ENCODE measurements at regions of chr6 and their contacts with region 1.

Region 1: GRCh38 chr6:27687154-27688013 is 214.5 kb upstream of the ZNF184 start:
- DNase-seq: peak; percentile 76
- H3K4me3 ChIP-seq: peak overlapping the region; percentile 65 to 67 (median 66)
- H3K27ac ChIP-seq: no peak overlapping the region
- H3K4me1 ChIP-seq: peaks cover 5% of the 10 kb centered on the region
- H3K27me3 ChIP-seq: no peaks in the 10 kb centered on the region
- CTCF ChIP-seq: peak; percentile 72 to 83

Region 2: DNA sequence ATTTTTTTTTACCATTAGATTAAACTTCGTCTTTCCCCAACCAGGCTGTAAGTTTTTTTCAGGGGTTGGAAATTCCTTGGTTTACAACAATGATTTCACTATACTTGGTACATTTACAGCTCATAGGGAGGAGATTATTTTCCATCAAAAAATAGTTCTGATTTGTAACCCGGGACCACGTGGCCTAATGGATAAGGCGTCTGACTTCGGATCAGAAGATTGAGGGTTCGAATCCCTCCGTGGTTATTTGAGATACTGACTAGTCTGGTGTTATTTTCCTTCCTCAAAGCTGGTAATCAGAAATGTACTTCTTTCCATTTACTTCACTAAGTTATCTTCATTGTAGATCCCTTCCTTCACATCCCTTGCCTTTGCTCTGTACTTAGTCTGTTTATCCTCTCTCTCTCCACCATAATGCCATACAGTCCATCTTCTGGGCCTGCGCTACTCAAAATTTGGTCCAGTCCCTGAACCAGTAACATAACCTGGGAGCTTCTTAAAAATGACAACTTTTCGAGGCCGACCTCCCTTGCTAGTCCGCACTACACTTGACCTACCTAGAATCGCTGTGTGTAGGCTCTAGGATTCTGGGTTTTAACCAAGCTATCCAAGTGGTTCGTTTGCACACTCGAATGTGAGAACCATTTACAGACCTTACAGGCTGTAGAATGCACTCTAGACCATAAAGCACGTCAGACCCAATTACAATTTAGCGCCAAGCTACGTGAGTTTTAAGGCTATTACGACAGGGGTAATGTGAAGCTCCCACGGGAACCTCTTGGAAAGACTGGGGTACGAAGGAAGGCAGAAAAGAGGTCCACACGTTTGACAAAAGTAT is 1364.5 kb before region 1 on chr6:
- CTCF ChIA-PET with region 1: no interaction called
- dilution Hi-C with region 1: no loop called
- in situ Hi-C with region 1: no loop called
- intact Hi-C with region 1: loop called (anchors 10 kb)
- DNase-seq: peak; percentile 90
- H3K4me3 ChIP-seq: peak overlapping the region; percentile 54 to 87 (median 60)
- H3K27ac ChIP-seq: peak overlapping the region; percentile 34
- H3K4me1 ChIP-seq: no peaks in the 10 kb centered on the region
- H3K27me3 ChIP-seq: no peaks in the 10 kb centered on the region
- CTCF ChIP-seq: no peak

Region 3: GRCh38 chr6:27188885-27189418 is 498.4 kb before region 1 on chr6:
- CTCF ChIA-PET with region 1: no interaction called
- dilution Hi-C with region 1: no loop called
- in situ Hi-C with region 1: no loop called
- intact Hi-C with region 1: loop called (anchors 1 kb)
- DNase-seq: peak; percentile 71
- H3K4me3 ChIP-seq: peak overlapping the region; percentile 56 to 74 (median 71)
- H3K27ac ChIP-seq: peak overlapping the region; percentile 44
- H3K4me1 ChIP-seq: no peaks in the 10 kb centered on the region
- H3K27me3 ChIP-seq: no peaks in the 10 kb centered on the region
- CTCF ChIP-seq: peak; percentile 38 to 68

Region 4: DNA sequence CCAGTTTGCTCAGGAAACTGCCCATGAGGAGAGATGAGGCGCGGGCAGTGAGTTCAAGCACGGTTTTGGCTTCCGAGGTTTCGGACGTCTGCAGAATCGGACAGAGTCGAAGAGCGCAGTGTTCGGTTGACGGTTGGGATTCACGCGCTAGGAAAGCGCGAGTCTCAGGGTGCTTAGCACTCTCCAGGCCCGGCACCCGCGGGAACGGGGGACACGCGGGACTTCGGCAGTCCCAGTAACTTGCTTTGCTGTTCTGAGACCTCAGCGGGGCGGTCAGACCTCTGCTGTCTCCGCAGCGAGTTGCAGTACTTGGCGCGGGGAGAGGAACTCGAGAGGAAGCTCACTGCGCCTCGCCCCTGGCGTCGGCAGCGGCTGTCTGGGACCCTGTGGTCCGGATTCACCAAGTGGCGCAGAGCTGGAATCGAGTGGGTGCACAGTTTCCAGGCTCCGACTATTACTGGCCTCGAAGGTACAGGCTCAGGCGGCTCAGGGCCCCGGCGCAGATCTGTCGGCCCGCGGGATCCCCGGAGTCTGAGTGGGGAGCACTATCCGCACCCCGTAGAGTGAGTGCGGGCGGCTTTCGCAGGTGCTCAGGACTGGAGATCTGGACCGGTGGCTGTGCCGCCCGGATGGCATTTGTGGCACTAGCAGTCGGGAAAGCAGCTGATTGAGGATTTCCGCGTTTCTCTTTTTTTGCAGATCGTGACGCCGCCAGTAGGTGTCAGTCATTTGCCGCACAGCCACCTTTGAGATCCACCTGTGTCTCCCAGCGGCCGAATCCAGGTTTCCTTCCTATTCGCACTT is 375.0 kb before region 1 on chr6 and contains the start of gene POM121L2:
- CTCF ChIA-PET with region 1: no interaction called
- dilution Hi-C with region 1: no loop called
- in situ Hi-C with region 1: no loop called
- intact Hi-C with region 1: loop called (anchors 5 kb)
- DNase-seq: peak; percentile 73
- H3K4me3 ChIP-seq: peak within 1 kb of the TSS; percentile 60 to 90 (median 65)
- H3K27ac ChIP-seq: no peak within 1 kb of the TSS
- H3K4me1 ChIP-seq: peaks cover 13% of the 10 kb centered on the region
- H3K27me3 ChIP-seq: no peaks in the 10 kb centered on the region
- CTCF ChIP-seq: peak; percentile 64 to 87
- total RNA-seq, gene POM121L2: not detected

Region 5: DNA sequence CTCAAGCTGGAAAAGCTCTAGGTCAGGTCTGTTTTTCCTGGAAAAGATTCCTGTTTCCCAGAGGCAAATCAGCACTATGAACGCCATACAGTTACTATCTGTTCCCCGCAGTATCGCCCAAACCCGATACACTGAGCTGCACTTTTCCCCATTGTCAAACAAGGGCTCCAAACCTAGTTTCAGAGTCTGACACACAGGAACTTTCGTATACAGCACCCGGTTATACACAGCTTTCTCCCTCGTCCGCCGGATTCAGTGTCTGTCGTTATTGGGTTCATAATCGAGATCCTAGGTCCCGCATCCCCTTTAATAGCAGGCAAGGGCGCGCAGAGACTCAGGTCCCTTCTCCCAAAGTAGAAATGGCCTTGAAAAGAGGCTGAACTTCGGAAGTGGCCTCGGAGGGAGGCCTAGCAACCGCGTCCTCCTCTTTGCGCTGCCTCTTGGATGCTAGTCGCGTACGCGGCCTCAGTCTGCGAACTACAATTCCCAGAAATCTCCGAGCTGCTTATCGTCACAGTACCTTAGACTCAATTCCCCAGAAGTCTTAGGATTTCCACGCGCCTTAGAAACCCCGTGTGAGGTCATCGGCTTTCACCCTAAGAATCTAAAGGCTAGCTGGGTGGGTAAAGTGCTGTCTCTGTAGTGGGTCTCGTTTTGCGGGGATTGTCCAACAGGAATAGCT is 264.6 kb before region 1 on chr6:
- CTCF ChIA-PET with region 1: no interaction called
- dilution Hi-C with region 1: no loop called
- in situ Hi-C with region 1: no loop called
- intact Hi-C with region 1: no loop called
- DNase-seq: no peak
- H3K4me3 ChIP-seq: no peak overlapping the region
- H3K27ac ChIP-seq: no peak overlapping the region
- H3K4me1 ChIP-seq: no peaks in the 10 kb centered on the region
- H3K27me3 ChIP-seq: no peaks in the 10 kb centered on the region
- CTCF ChIP-seq: no peak

Region 6: GRCh38 chr6:27503436-27504030 is 183.9 kb before region 1 on chr6:
- CTCF ChIA-PET with region 1: no interaction called
- dilution Hi-C with region 1: no loop called
- in situ Hi-C with region 1: no loop called
- intact Hi-C with region 1: loop called (anchors 5 kb)
- DNase-seq: peak; percentile 61
- H3K4me3 ChIP-seq: peak overlapping the region; percentile 48 to 64 (median 60)
- H3K27ac ChIP-seq: peak overlapping the region; percentile 71
- H3K4me1 ChIP-seq: no peaks in the 10 kb centered on the region
- H3K27me3 ChIP-seq: no peaks in the 10 kb centered on the region
- CTCF ChIP-seq: no peak

Region 7: DNA sequence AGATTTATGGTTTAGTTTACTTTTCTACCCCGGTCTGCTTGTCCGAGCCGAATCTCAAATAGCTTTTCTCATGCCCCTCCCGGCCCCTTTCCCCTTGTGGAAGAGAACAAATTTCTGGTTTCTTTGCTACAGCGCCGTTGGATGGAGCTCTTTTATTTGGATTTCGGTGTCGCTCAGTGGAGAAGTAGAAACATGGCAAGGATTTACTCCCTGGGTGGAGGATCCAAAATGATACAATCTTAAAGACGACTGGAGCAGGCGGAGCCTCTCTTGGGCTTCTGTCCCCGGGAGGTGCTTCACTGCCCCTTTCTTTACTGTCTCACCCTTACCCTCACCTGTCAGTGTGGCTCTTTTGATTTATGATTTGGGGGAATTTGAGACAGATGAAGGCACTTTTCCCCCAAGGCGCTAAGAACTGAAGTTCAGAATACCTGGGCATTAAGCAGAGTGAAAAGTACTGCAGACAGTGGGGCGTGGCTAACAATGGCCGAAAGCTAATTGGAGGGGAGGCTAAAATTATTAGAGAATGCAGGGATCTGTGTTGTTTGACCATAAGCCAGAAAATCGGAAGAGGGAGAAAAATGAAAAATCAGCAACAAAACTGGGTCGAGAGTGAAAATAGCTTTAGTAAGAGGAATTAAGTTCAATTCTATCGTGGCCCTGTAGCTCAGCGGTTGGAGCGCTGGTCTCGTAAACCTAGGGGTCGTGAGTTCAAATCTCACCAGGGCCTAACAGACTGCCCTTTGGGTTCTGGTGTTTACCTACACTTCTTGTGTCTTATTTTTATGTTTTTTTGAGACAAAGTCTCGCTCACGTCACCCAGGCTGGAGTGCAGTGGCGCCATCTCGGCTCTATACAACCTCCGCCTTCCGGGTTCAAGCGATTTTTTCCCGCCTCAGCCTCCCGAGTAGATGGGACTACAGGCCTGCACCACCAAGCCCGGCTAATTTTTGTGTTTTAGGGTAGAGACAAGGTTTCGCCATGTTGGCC is 69.4 kb before region 1 on chr6:
- CTCF ChIA-PET with region 1: no interaction called
- dilution Hi-C with region 1: no loop called
- in situ Hi-C with region 1: no loop called
- intact Hi-C with region 1: loop called (anchors 1 kb)
- DNase-seq: peak; percentile 64
- H3K4me3 ChIP-seq: peak overlapping the region; percentile 44 to 78 (median 64)
- H3K27ac ChIP-seq: peak overlapping the region; percentile 0
- H3K4me1 ChIP-seq: peaks cover 4% of the 10 kb centered on the region
- H3K27me3 ChIP-seq: no peaks in the 10 kb centered on the region
- CTCF ChIP-seq: peak in 1 of 2 donors; percentile 24

Region 8: DNA sequence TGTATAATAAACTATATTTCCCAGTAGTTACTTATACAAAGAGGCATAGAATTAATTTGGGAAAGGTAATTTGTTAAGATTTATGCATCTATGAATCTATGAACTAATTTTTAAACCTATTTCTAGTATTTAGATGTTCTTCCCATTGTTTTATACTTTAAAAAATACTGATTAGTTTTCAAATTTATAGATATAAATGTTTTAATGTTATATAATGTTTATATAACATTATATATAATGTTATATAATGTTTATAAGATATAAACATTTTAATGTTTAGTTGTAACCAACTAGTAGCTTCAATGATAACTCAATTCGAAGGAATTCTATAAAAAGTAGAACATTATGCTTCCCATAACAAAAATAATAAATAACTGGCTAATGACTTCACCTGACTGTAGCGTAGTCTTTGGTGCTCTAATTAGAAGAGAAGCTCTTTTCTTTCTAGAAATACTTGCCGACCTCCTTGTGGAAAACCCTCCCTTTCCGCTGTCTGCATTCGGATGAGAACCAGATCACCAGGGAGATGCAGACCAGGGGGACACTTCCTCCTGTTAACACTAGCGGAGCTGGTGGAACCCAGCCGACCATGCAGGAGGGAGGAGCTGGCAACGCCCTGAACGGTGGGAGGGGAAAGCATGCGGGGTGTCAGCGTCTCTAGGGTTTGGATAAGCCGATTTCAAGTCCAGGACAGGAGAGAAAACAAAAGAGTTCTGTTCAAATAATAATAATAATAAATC is 66.5 kb after region 1 on chr6:
- CTCF ChIA-PET with region 1: interaction called, 3 read pairs
- dilution Hi-C with region 1: no loop called
- in situ Hi-C with region 1: no loop called
- intact Hi-C with region 1: loop called (anchors 1 kb)
- DNase-seq: peak; percentile 81
- H3K4me3 ChIP-seq: peak overlapping the region; percentile 49 to 86 (median 80)
- H3K27ac ChIP-seq: peak overlapping the region; percentile 27
- H3K4me1 ChIP-seq: no peaks in the 10 kb centered on the region
- H3K27me3 ChIP-seq: no peaks in the 10 kb centered on the region
- CTCF ChIP-seq: peak in 1 of 2 donors; percentile 39